Activated CD4-positive, alpha-beta T cell treated with anti-CD3 and anti-CD28 coated beads for 36 hours (primary cell): ENCODE measurements at regions of chr1 and their contacts with region 1.

Region 1: DNA sequence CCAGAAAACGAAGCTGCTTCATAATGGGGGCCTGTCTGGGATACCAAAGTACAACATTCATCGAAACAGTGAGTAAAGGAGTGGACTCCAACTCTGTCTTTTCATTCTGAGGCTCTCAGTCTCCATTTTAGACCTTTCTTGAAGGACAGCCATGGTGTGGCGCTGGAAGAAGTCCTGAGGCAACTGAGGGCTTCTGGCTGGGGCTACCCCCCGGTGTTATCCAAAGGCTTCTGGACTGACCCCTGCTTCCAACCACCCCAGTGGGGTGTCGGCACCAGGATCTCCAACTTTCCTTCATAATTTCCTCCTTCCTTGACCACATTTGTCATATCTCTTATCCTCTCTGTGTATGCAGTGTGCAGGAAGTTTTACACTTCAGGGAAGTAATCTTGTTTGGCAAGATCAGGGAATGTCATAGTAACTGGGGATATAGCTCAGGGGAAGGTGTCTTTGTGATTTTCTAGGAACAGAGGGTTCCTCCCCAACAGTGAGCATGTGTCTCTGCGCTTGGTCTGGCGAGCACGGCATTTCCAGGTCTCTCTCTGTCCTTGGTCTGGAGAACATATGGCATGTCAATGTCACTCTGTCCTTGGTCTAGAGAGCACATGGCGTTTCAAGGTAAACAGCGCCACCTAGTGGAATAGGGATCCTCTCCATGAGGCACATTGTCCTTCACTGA is 19.4 kb upstream of the BSDC1 start:
- DNase-seq: peak; percentile 83
- ATAC-seq: peak; percentile 88
- H3K4me3 Mint-ChIP-seq: no peak overlapping the region
- H3K27ac Mint-ChIP-seq: peak overlapping the region; percentile 62
- H3K4me1 Mint-ChIP-seq: peaks cover 2% of the 10 kb centered on the region
- H3K27me3 Mint-ChIP-seq: peaks cover 3% of the 10 kb centered on the region

Region 2: DNA sequence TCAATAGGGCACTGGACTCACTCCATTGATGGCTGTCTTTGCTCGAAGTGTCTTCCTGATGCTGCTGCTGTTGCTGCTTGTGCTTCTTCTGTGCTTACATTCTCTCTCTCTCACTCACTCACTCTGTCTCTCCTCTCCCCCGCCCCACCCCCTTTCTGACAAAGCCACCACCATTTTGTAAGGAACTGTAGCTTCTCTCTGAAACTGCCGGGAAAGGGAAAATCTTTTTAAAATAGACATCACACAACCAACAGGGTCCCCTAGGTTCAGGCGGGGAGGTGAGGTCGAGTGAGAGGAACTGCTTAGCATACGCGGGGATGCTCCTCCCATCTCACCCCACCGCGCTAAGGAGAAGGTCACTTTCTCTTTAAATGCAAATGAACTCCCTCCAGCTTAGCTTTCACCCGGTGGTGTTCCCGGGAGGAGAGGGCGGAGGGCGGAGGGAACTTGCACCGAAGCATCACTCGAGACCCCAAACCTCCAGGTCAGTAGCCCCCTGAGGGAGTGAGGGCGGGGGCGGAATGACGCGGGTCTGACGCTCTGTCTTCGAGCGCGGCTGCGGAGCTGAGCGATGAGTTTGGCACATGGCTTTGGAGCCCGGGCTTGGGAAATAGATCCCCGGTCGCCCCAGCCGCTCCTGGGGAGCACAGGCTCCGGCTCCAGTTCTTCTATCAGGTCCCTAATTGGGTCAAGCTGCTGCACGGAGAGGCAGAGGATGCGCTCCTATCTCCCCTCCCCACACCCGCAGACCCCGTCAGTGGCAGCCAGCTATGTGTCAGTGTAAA is 213.2 kb before region 1 on chr1 and contains the start of gene CCDC28B:
- CTCF ChIA-PET with region 1: no interaction called
- POLR2A ChIA-PET with region 1: no interaction called
- intact Hi-C with region 1: loop called in 1 of 2 experiments (anchors 5 kb)
- DNase-seq: peak; percentile 77
- ATAC-seq: peak; percentile 53
- H3K4me3 Mint-ChIP-seq: peak within 1 kb of the TSS; percentile 71
- H3K27ac Mint-ChIP-seq: peak within 1 kb of the TSS; percentile 86
- H3K4me1 Mint-ChIP-seq: peaks cover 57% of the 10 kb centered on the region
- H3K27me3 Mint-ChIP-seq: no peaks in the 10 kb centered on the region
- total RNA-seq, gene CCDC28B: 13.0 to 19.3 TPM

Region 3: GRCh38 chr1:32215629-32216480 is 197.8 kb before region 1 on chr1:
- CTCF ChIA-PET with region 1: interaction called, 9 read pairs
- POLR2A ChIA-PET with region 1: no interaction called
- intact Hi-C with region 1: loop called (anchors 1 kb)
- DNase-seq: peak; percentile 79
- ATAC-seq: peak; percentile 97
- H3K4me3 Mint-ChIP-seq: no peak overlapping the region
- H3K27ac Mint-ChIP-seq: peak overlapping the region; percentile 8
- H3K4me1 Mint-ChIP-seq: peaks cover 15% of the 10 kb centered on the region
- H3K27me3 Mint-ChIP-seq: no peaks in the 10 kb centered on the region

Region 4: GRCh38 chr1:32335790-32336590 is 77.7 kb before region 1 on chr1 and contains the start of gene MARCKSL1:
- CTCF ChIA-PET with region 1: no interaction called
- POLR2A ChIA-PET with region 1: no interaction called
- intact Hi-C with region 1: loop called in 1 of 2 experiments (anchors 1 kb)
- DNase-seq: peak; percentile 88
- ATAC-seq: peak; percentile 50
- H3K4me3 Mint-ChIP-seq: peak within 1 kb of the TSS; percentile 77
- H3K27ac Mint-ChIP-seq: peak within 1 kb of the TSS; percentile 76
- H3K4me1 Mint-ChIP-seq: peaks cover 52% of the 10 kb centered on the region
- H3K27me3 Mint-ChIP-seq: no peaks in the 10 kb centered on the region
- total RNA-seq, gene MARCKSL1: 27.0 to 29.3 TPM

Region 5: DNA sequence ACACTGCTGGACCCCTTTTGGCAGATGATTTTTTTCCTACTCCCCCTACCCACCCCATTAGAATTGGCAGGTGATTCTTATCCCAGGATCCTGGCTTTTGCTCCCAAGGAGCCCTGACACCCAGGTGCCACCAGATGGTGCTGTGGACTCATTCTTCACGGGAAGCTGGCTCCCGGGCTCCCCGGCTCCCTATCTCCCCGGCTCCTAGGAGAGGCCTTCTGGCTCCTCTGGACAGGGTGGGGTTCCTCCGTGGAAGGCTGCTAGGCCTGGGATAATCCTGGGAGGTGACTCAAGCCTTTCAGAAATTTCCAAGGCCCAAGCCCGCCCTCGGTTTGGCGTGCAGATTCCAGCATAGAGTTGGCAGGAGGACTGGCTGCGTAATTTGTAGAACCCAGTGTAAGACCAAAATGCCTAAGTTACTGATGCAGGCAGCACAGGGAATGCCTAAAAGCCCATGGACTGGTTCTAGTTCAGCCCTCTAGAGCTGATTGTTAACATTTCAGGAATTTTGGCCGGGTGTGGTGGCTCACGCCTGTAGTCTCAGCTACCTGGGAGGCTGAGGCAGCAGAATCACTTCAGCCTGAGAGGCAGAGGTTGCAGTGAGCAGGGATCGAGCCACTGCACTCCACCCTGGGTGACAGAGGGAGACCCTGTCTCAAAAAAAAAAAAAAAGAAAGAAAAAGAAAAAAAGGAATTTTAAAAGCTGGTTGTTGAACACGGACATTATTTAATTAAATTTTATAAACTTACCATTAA is 12.6 kb before region 1 on chr1:
- CTCF ChIA-PET with region 1: interaction called, 17 read pairs
- POLR2A ChIA-PET with region 1: no interaction called
- intact Hi-C with region 1: loop called (anchors 1 kb)
- DNase-seq: peak; percentile 77
- ATAC-seq: peak; percentile 85
- H3K4me3 Mint-ChIP-seq: no peak overlapping the region
- H3K27ac Mint-ChIP-seq: no peak overlapping the region
- H3K4me1 Mint-ChIP-seq: peaks cover 2% of the 10 kb centered on the region
- H3K27me3 Mint-ChIP-seq: no peaks in the 10 kb centered on the region